ENCODE measurements at regions of chr3 and their contacts with region 1.

Region 1: DNA sequence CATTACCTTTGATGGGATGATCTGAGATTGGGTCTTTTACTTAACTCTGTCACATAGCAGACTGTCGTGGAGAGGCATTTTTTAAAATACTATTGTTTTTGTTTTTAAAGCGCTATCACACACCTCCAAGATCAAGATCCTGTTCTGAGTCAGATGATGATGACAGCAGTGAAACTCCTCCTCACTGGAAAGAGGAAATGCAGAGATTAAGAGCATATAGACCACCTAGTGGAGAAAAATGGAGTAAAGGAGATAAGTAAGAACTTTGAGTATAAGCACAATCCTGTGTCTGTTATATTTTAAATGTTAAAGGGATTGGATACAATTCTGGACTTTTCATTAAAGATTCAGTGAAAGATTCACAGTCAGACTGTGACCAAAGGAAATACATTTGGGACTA is 18.4 kb upstream of the ZBTB47 start:
- DNase-seq: no peak
- H3K4me3 Mint-ChIP-seq: no peak overlapping the region
- H3K27ac Mint-ChIP-seq: no peak overlapping the region
- H3K4me1 Mint-ChIP-seq: peaks cover 20% of the 10 kb centered on the region
- H3K27me3 Mint-ChIP-seq: no peaks in the 10 kb centered on the region

Region 2: GRCh38 chr3:42468111-42468510 is 167.0 kb before region 1 on chr3:
- CTCF ChIA-PET with region 1: no interaction called
- POLR2A ChIA-PET with region 1: no interaction called
- intact Hi-C with region 1: no loop called
- DNase-seq: no peak
- H3K4me3 Mint-ChIP-seq: no peak overlapping the region
- H3K27ac Mint-ChIP-seq: no peak overlapping the region
- H3K4me1 Mint-ChIP-seq: no peaks in the 10 kb centered on the region
- H3K27me3 Mint-ChIP-seq: peaks cover 2% of the 10 kb centered on the region

Region 3: GRCh38 chr3:42581709-42582473 is 53.2 kb before region 1 on chr3 and contains the start of gene SEC22C:
- CTCF ChIA-PET with region 1: interaction called, 11 read pairs
- POLR2A ChIA-PET with region 1: no interaction called
- intact Hi-C with region 1: loop called (anchors 1 kb)
- DNase-seq: peak; percentile 98
- H3K4me3 Mint-ChIP-seq: peak within 1 kb of the TSS; percentile 83
- H3K27ac Mint-ChIP-seq: peak within 1 kb of the TSS; percentile 91
- H3K4me1 Mint-ChIP-seq: peaks cover 42% of the 10 kb centered on the region
- H3K27me3 Mint-ChIP-seq: no peaks in the 10 kb centered on the region
- total RNA-seq, gene SEC22C: 47.0 to 49.2 TPM

Region 4: DNA sequence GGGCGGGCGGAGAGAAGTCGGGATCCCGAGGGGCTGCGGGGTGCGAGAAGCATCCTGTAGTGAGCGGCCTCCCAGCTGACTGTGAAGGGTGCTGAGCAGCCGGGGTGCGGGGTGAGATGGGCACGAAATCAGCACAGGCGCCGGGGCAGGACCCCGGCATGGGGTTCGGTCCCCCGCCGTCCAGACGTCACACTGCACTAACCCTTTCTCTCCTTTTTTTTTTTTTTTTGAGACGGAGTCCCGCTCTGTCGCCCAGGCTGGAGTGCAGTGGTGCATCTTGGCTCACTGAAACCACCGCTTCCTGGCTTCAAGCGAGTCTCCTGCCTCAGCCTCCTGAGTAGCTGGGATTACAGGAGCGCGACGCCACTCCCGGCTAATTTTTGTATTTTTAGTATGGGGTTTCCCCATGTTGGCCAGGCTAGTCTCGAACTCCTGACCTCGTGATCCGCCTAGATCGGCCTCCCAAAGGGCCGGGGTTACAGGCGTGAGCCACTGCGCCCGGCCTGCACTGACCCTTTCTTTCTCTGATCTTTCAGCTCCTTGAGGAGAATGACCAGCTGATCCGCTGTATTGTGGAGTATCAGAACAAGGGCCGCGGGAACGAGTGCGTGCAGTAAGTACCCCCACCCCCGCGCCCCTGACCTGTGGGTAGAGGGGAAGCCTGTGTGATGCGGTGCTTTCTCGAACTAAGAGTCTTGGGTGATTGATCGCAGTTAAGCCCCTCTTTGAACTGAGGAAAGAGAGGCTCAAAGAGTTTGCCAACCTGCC is 43.9 kb before region 1 on chr3:
- CTCF ChIA-PET with region 1: interaction called, 4 read pairs
- POLR2A ChIA-PET with region 1: interaction called, 3 read pairs
- intact Hi-C with region 1: loop called (anchors 2 kb)
- DNase-seq: no peak
- H3K4me3 Mint-ChIP-seq: peak overlapping the region; percentile 90
- H3K27ac Mint-ChIP-seq: peak overlapping the region; percentile 93
- H3K4me1 Mint-ChIP-seq: peaks cover 39% of the 10 kb centered on the region
- H3K27me3 Mint-ChIP-seq: no peaks in the 10 kb centered on the region

Region 5: GRCh38 chr3:42683875-42684598 is 48.9 kb after region 1 on chr3:
- CTCF ChIA-PET with region 1: no interaction called
- POLR2A ChIA-PET with region 1: no interaction called
- intact Hi-C with region 1: loop called (anchors 1 kb)
- DNase-seq: peak; percentile 87
- H3K4me3 Mint-ChIP-seq: no peak overlapping the region
- H3K27ac Mint-ChIP-seq: no peak overlapping the region
- H3K4me1 Mint-ChIP-seq: peaks cover 11% of the 10 kb centered on the region
- H3K27me3 Mint-ChIP-seq: peaks cover 25% of the 10 kb centered on the region

Region 6: GRCh38 chr3:42898882-42899675 is 264.0 kb after region 1 on chr3:
- CTCF ChIA-PET with region 1: no interaction called
- POLR2A ChIA-PET with region 1: no interaction called
- intact Hi-C with region 1: no loop called
- DNase-seq: no peak
- H3K4me3 Mint-ChIP-seq: no peak overlapping the region
- H3K27ac Mint-ChIP-seq: no peak overlapping the region
- H3K4me1 Mint-ChIP-seq: no peaks in the 10 kb centered on the region
- H3K27me3 Mint-ChIP-seq: peaks cover 7% of the 10 kb centered on the region

Measured in activated CD4-positive, alpha-beta memory T cell treated with anti-CD3 and anti-CD28 coated beads for 36 hours (primary cell).